ENCODE measurements at regions of chr15 and their contacts with region 1.

Region 1: DNA sequence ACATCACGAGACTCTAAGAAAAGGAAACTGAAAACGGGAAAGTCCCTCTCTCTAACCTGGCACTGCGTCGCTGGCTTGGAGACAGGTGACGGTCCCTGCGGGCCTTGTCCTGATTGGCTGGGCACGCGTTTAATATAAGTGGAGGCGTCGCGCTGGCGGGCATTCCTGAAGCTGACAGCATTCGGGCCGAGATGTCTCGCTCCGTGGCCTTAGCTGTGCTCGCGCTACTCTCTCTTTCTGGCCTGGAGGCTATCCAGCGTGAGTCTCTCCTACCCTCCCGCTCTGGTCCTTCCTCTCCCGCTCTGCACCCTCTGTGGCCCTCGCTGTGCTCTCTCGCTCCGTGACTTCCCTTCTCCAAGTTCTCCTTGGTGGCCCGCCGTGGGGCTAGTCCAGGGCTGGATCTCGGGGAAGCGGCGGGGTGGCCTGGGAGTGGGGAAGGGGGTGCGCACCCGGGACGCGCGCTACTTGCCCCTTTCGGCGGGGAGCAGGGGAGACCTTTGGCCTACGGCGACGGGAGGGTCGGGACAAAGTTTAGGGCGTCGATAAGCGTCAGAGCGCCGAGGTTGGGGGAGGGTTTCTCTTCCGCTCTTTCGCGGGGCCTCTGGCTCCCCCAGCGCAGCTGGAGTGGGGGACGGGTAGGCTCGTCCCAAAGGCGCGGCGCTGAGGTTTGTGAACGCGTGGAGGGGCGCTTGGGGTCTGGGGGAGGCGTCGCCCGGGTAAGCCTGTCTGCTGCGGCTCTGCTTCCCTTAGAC is at the start of gene B2M:
- DNase-seq: peak; percentile 92
- ATAC-seq: peak; percentile 74
- H3K4me3 Mint-ChIP-seq: peak within 1 kb of the TSS; percentile 99
- H3K27ac Mint-ChIP-seq: peak within 1 kb of the TSS; percentile 100
- H3K4me1 Mint-ChIP-seq: peaks cover 53% of the 10 kb centered on the region
- H3K27me3 Mint-ChIP-seq: no peaks in the 10 kb centered on the region
- CTCF ChIP-seq: no peak
- total RNA-seq, gene B2M: 3,396 and 3,707 TPM in 2 replicates

Region 2: DNA sequence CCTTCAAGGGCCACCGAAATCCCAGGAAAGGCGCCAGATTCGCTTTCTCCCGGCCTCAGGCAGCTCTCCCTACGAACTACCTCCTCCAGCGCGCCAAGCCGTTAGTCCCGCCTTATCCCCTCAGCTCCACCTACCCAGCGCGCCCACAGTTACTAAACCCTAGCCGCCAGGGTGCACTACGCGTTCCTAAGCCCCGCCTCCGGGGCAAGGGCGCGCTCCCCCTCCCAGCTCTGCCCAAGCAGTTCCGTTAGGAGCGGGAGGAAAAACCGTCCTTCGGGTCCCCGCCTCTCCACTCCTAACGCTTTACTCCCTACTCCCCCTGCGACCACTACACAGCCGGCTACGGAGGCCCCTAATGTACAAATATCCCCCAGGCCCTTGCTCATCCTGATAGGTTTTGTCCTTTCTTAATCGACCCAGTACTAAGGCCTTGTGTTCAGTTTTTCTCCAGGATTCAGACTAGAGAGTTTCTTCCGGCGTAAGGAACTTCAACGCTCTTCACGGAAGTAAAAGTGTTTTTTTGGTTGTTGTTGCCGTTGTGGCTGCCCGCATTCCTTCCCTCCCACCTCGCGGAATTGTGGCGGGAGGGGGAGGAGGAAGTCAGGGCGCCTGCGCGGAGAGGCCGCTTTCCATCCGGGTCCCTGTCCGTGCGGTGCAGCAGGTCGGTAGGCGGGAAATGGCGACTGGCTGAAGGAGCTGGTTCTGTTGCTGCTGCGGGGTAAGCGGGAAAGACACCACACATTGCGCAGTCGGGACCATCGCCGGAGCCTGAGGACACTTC is 284.4 kb before region 1 on chr15 and contains the start of gene CTDSPL2:
- CTCF ChIA-PET with region 1: no interaction called
- POLR2A ChIA-PET with region 1: no interaction called
- intact Hi-C with region 1: loop called (anchors 1 kb)
- DNase-seq: peak; percentile 87
- ATAC-seq: peak; percentile 97
- H3K4me3 Mint-ChIP-seq: peak within 1 kb of the TSS; percentile 100
- H3K27ac Mint-ChIP-seq: peak within 1 kb of the TSS; percentile 99
- H3K4me1 Mint-ChIP-seq: peaks cover 41% of the 10 kb centered on the region
- H3K27me3 Mint-ChIP-seq: no peaks in the 10 kb centered on the region
- CTCF ChIP-seq: no peak
- total RNA-seq, gene CTDSPL2: 44.6 and 46.8 TPM in 2 replicates

Region 3: DNA sequence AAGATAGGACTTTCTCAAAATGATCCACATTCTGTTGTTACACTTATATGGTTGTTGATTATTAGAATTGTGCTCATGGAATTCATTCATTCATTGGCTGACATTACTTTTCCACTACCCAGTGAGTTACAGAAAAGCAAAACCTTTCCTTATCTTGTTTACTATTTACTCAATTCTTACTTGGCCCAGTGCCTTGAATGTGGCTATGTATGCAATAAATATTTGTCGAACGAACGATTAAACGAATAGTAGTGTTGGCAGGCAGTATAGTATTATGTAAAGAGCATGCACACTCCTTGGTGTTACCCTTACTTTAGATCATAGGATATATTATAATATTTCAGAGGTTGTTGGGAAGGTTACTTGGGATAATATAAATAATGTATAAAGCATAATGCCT is 253.1 kb before region 1 on chr15:
- CTCF ChIA-PET with region 1: no interaction called
- POLR2A ChIA-PET with region 1: no interaction called
- intact Hi-C with region 1: no loop called
- DNase-seq: no peak
- ATAC-seq: no peak
- H3K4me3 Mint-ChIP-seq: no peak overlapping the region
- H3K27ac Mint-ChIP-seq: no peak overlapping the region
- H3K4me1 Mint-ChIP-seq: peaks cover 14% of the 10 kb centered on the region
- H3K27me3 Mint-ChIP-seq: no peaks in the 10 kb centered on the region
- CTCF ChIP-seq: no peak

Region 4: GRCh38 chr15:44529864-44530604 is 181.5 kb before region 1 on chr15:
- CTCF ChIA-PET with region 1: no interaction called
- POLR2A ChIA-PET with region 1: no interaction called
- intact Hi-C with region 1: no loop called
- DNase-seq: no peak
- ATAC-seq: no peak
- H3K4me3 Mint-ChIP-seq: no peak overlapping the region
- H3K27ac Mint-ChIP-seq: peak overlapping the region; percentile 3
- H3K4me1 Mint-ChIP-seq: peaks cover 4% of the 10 kb centered on the region
- H3K27me3 Mint-ChIP-seq: no peaks in the 10 kb centered on the region
- CTCF ChIP-seq: no peak

Region 5: DNA sequence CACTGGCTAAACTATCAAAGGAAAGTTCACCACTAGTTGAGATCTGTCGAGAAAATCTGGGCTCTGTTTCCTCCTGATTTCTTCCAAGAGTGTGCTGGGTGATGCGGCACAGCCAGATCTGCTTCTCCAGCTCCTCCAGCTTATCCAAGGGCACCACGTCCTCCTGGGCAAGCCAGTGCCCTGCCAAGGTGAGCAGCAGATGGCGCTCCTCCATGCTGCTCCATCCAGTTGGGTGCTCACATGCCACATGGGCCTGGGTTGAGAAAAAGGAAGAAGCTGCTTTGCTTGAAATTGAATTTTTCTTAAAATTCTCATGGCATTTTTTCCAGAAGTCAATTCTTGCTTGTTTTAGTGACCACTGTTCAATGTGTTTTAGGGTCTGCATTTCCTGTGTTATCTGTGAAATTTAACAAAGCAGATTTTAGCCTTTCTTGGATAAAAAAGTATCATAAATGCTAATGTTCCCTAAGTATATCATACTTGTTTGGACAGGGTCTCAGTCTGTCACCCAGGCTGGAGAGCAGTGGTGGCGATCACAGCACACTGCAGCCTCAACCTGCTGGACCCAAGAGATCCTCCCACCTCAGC is 127.3 kb before region 1 on chr15:
- CTCF ChIA-PET with region 1: interaction called, 3 read pairs
- POLR2A ChIA-PET with region 1: interaction called, 10 read pairs
- intact Hi-C with region 1: no loop called
- DNase-seq: peak; percentile 31
- ATAC-seq: peak; percentile 82
- H3K4me3 Mint-ChIP-seq: no peak overlapping the region
- H3K27ac Mint-ChIP-seq: no peak overlapping the region
- H3K4me1 Mint-ChIP-seq: peaks cover 2% of the 10 kb centered on the region
- H3K27me3 Mint-ChIP-seq: no peaks in the 10 kb centered on the region
- CTCF ChIP-seq: no peak

Region 6: GRCh38 chr15:44670491-44670890 is 41.0 kb before region 1 on chr15:
- CTCF ChIA-PET with region 1: interaction called, 239 read pairs
- POLR2A ChIA-PET with region 1: interaction called, 1,048 read pairs
- intact Hi-C with region 1: no loop called
- DNase-seq: no peak
- ATAC-seq: peak; percentile 14
- H3K4me3 Mint-ChIP-seq: peak overlapping the region; percentile 42
- H3K27ac Mint-ChIP-seq: peak overlapping the region; percentile 95
- H3K4me1 Mint-ChIP-seq: peaks cover 88% of the 10 kb centered on the region
- H3K27me3 Mint-ChIP-seq: no peaks in the 10 kb centered on the region
- CTCF ChIP-seq: no peak

Region 7: GRCh38 chr15:44682211-44682610 is 29.3 kb before region 1 on chr15:
- CTCF ChIA-PET with region 1: interaction called, 10 read pairs
- POLR2A ChIA-PET with region 1: interaction called, 136 read pairs
- intact Hi-C with region 1: loop called (anchors 1 kb)
- DNase-seq: no peak
- ATAC-seq: peak; percentile 26
- H3K4me3 Mint-ChIP-seq: peak overlapping the region; percentile 60
- H3K27ac Mint-ChIP-seq: peak overlapping the region; percentile 91
- H3K4me1 Mint-ChIP-seq: peaks cover 76% of the 10 kb centered on the region
- H3K27me3 Mint-ChIP-seq: no peaks in the 10 kb centered on the region
- CTCF ChIP-seq: no peak

Region 8: GRCh38 chr15:44698641-44699040 is 12.9 kb before region 1 on chr15:
- CTCF ChIA-PET with region 1: no interaction called
- POLR2A ChIA-PET with region 1: interaction called, 14 read pairs
- intact Hi-C with region 1: no loop called
- DNase-seq: no peak
- ATAC-seq: no peak
- H3K4me3 Mint-ChIP-seq: no peak overlapping the region
- H3K27ac Mint-ChIP-seq: no peak overlapping the region
- H3K4me1 Mint-ChIP-seq: peaks cover 11% of the 10 kb centered on the region
- H3K27me3 Mint-ChIP-seq: no peaks in the 10 kb centered on the region
- CTCF ChIP-seq: no peak

Region 9: GRCh38 chr15:44738340-44738984 is 26.9 kb after region 1 on chr15:
- CTCF ChIA-PET with region 1: interaction called, 164 read pairs
- POLR2A ChIA-PET with region 1: interaction called, 2,387 read pairs
- intact Hi-C with region 1: loop called (anchors 1 kb)
- DNase-seq: no peak
- ATAC-seq: no peak
- H3K4me3 Mint-ChIP-seq: no peak overlapping the region
- H3K27ac Mint-ChIP-seq: no peak overlapping the region
- H3K4me1 Mint-ChIP-seq: peaks cover 30% of the 10 kb centered on the region
- H3K27me3 Mint-ChIP-seq: no peaks in the 10 kb centered on the region
- CTCF ChIP-seq: peak; percentile 92